Body of pancreas (tissue), 4 donors: ENCODE measurements at regions of chr5 and their contacts with region 1.

Region 1: DNA sequence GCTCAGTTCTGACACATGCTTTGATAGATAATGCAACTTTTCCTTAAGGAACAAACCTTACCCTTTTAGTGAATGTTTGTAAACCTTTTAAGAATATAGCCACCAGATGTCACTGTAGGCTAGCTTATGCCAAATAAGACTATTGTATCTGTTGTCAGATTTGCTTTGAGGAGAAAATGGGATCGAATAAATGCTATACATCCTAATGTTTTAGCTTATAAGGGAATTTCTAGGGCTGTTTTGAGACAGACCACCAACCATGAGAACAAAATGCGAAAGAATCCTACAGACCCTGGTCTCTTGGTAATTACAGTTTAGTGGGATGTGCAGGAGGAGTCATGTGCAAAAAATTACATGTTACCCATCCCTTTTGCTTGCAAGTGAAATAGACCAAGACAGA is 127.6 kb upstream of the NMUR2 start:
- DNase-seq: no peak
- ATAC-seq: no peak
- H3K4me3 ChIP-seq: no peak overlapping the region
- H3K27ac ChIP-seq: no peak overlapping the region
- H3K4me1 ChIP-seq: no peaks in the 10 kb centered on the region
- H3K27me3 ChIP-seq: no peaks in the 10 kb centered on the region
- CTCF ChIP-seq: peak in 6 of 7 experiments; percentile 28 to 70 (median 61)
- POLR2A ChIP-seq: no peak

Region 2: DNA sequence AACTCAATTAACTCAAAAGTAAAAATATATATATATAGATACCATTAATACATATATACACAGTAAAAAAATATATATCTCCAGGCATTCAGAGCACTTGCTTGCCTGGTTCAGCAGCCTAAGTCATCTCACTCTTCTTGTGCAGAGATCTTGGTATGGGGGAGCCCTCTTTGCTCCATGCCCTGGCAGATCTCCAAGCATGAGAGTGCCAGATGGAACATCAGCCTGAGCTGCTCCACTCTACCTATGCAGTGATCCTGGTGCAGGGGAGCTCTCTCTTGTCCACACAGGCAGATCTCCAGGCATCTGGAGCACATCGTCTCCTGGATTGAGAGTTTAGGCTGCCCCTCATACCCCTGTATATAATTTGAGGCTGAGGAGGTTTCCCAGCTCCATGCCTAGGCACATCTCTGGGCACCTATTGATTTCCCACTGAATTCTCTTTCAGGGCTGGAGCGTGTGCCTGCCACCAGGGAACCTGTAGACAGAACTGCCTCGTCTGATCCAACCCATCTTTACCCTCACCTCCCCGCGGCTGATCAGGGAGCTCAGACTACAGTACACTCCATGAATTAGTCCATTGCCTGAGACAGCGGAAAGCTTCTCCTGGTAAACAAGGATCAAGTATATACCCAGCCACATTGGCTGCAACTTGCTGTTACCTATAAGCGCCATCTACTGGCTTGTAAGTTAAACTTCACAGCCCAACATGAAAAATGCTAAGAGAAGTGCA is 615.3 kb after region 1 on chr5:
- intact Hi-C with region 1: loop called (anchors 10 kb)
- DNase-seq: peak in 3 of 4 donors; percentile 39 to 45 (median 41)
- ATAC-seq: peak; percentile 52
- H3K4me3 ChIP-seq: no peak overlapping the region
- H3K27ac ChIP-seq: no peak overlapping the region
- H3K4me1 ChIP-seq: no peaks in the 10 kb centered on the region
- H3K27me3 ChIP-seq: no peaks in the 10 kb centered on the region
- CTCF ChIP-seq: peak; percentile 41 to 72 (median 59)
- POLR2A ChIP-seq: no peak

Region 3: DNA sequence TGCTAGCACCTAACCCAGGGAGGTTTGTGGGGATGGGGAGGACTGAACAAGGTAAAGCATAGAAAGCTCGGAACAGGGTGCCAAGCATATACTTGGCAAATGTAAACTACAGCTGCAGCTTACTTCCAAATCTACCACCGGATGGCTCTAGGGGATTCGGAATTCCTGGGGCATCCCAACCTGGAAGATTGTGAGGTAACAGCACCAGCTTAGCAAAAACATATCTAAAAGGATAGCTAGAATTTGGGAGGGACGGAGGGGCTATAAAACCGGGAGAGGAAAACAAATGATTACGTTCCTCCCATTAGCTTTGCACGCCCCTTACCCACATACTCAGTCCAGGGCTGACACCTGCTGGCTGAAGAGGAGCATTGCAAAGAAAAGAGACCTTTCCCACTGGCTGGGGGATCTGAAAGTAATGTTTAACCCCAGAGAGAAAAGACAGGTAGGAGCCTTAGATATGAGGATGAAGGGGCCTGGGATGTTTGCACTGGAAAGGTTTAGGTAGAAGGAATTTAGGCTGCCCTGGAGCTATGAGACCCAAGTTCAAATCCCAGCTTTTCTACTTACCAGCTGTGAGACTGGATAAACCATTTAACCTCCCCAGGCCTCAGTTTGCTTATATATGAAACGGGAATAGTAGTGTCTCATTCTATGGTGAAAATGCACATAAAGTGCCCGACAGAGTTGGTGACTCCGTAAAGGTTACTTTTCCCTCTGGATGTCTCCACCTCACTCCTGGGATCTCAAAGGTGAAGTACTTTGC is 1432.3 kb after region 1 on chr5:
- intact Hi-C with region 1: loop called (anchors 5 kb)
- DNase-seq: peak; percentile 46 to 59 (median 50)
- ATAC-seq: peak; percentile 65
- H3K4me3 ChIP-seq: no peak overlapping the region
- H3K27ac ChIP-seq: no peak overlapping the region
- H3K4me1 ChIP-seq: peaks cover 4% of the 10 kb centered on the region
- H3K27me3 ChIP-seq: no peaks in the 10 kb centered on the region
- CTCF ChIP-seq: peak; percentile 54 to 87 (median 79)
- POLR2A ChIP-seq: no peak